Natural killer cell (primary cell): ENCODE measurements at regions of chr10 and their contacts with region 1.

Region 1: GRCh38 chr10:112434988-112435619 is 11.6 kb downstream of the ZDHHC6 start:
- DNase-seq: peak in 1 of 2 donors; percentile 55
- ATAC-seq: no peak
- H3K4me3 ChIP-seq: no peak overlapping the region
- H3K4me3 Mint-ChIP-seq: no peak overlapping the region
- H3K27ac ChIP-seq: no peak overlapping the region
- H3K27ac Mint-ChIP-seq: no peak overlapping the region
- H3K4me1 ChIP-seq: no peaks in the 10 kb centered on the region
- H3K4me1 Mint-ChIP-seq: peaks cover 0 to 5% of the 10 kb centered on the region in 2 donors
- H3K27me3 ChIP-seq: no peaks in the 10 kb centered on the region
- H3K27me3 Mint-ChIP-seq: no peaks in the 10 kb centered on the region
- CTCF ChIP-seq: peak; percentile 54

Region 2: DNA sequence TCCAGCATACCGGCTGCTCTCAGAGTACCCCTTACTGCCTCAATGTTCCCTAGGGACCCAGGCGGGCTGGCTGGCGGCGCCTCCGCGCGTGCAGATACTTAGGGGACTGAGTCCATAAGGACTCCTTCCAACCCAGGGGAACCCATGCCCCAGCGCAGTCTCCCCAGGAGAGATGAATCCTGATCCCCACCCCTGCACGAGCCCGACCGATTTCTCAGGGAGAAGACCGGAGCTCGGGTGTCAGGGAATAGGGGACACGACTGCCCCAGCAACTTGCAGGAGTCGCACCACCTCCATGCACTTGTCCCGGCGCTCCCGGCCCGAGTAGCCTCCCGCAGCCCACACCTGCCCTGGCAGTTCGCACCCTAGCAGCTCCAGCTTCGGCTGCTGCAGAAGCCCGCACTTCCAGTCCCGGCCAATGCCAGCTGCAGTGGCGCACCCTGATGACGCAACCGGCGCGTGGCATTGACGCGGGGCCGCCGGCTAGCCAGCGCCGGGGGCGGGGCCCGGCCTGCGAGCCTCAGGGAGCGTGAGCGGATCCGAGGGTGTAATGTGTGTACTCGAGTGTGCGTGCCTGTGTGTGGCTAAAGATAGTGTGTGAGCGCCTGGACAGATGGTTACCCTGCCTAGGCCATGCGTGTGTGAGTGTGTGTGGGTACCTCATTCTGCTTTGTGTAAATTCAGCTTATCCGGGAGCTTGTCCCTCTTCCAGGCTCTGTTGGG is 251.6 kb before region 1 on chr10 and contains the start of gene GPAM:
- intact Hi-C with region 1: loop called (anchors 10 kb)
- DNase-seq: peak; percentile 97 to 100
- ATAC-seq: peak; percentile 97 to 99 (median 98)
- H3K4me3 ChIP-seq: peak within 1 kb of the TSS; percentile 98
- H3K4me3 Mint-ChIP-seq: peak within 1 kb of the TSS; percentile 95
- H3K27ac ChIP-seq: peak within 1 kb of the TSS; percentile 77
- H3K27ac Mint-ChIP-seq: peak within 1 kb of the TSS; percentile 90 to 96
- H3K4me1 ChIP-seq: peaks cover 12% of the 10 kb centered on the region
- H3K4me1 Mint-ChIP-seq: peaks cover 28% of the 10 kb centered on the region in 2 donors
- H3K27me3 ChIP-seq: no peaks in the 10 kb centered on the region
- H3K27me3 Mint-ChIP-seq: peaks cover 9 to 13% of the 10 kb centered on the region in 2 donors
- CTCF ChIP-seq: no peak
- total RNA-seq, gene GPAM: 4.7 to 11.7 (median 6.1) TPM

Region 3: GRCh38 chr10:112314822-112315474 is 120.2 kb before region 1 on chr10:
- intact Hi-C with region 1: loop called (anchors 10 kb)
- DNase-seq: peak; percentile 57 to 86
- ATAC-seq: peak; percentile 74 to 84 (median 75)
- H3K4me3 ChIP-seq: no peak overlapping the region
- H3K4me3 Mint-ChIP-seq: no peak overlapping the region
- H3K27ac ChIP-seq: no peak overlapping the region
- H3K27ac Mint-ChIP-seq: no peak overlapping the region
- H3K4me1 ChIP-seq: no peaks in the 10 kb centered on the region
- H3K4me1 Mint-ChIP-seq: no peaks in the 10 kb centered on the region
- H3K27me3 ChIP-seq: peaks cover 3% of the 10 kb centered on the region
- H3K27me3 Mint-ChIP-seq: peaks cover 12 to 44% of the 10 kb centered on the region in 2 donors
- CTCF ChIP-seq: peak; percentile 86